ENCODE measurements at regions of chr12 and their contacts with region 1.

Region 1: GRCh38 chr12:6752921-6753771 is at the start of gene MLF2:
- DNase-seq: peak; percentile 99
- CTCF ChIP-seq: peak; percentile 96

Region 2: DNA sequence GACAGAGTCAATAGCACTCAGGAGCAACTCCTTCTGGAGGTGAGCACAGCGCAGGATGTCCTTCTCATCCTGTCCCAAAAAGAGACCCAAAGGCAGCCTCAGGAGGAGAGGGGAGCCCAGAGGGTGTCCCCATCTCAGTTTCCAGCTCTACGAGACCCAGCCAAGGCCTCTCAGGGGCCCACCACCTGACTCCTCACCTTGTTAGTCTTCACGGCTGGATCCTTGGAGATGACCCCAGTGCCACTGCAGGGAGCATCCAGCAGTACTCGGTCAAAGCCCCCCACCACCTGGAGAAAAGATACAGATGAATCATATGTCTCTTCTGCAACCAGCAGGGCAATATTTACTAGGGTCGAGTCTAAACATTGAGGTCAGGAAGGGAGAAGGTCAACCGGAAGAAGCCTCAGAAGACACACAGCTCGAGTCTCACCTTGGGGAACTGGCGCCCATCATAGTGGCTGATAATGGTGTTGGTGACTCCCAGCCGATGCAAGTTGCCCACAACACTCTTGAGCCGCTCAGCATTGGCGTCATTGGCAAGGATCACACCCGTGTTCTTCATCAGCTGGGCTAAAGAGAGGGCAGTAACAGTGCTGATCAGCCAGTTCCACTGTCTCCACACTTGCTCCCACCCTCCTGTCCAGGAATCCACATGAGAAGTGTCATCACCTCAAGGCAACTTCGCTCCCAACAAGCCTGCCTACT is 192.5 kb before region 1 on chr12:
- CTCF ChIA-PET with region 1: no interaction called
- POLR2A ChIA-PET with region 1: no interaction called
- DNase-seq: no peak
- CTCF ChIP-seq: no peak

Region 3: GRCh38 chr12:6613776-6614512 is 139.2 kb before region 1 on chr12:
- CTCF ChIA-PET with region 1: interaction called, 13 read pairs
- POLR2A ChIA-PET with region 1: no interaction called
- DNase-seq: peak; percentile 70
- CTCF ChIP-seq: peak; percentile 19

Region 4: GRCh38 chr12:6735448-6736191 is 17.5 kb before region 1 on chr12:
- CTCF ChIA-PET with region 1: interaction called, 41 read pairs
- POLR2A ChIA-PET with region 1: no interaction called
- DNase-seq: peak; percentile 56
- CTCF ChIP-seq: peak; percentile 81

Region 5: DNA sequence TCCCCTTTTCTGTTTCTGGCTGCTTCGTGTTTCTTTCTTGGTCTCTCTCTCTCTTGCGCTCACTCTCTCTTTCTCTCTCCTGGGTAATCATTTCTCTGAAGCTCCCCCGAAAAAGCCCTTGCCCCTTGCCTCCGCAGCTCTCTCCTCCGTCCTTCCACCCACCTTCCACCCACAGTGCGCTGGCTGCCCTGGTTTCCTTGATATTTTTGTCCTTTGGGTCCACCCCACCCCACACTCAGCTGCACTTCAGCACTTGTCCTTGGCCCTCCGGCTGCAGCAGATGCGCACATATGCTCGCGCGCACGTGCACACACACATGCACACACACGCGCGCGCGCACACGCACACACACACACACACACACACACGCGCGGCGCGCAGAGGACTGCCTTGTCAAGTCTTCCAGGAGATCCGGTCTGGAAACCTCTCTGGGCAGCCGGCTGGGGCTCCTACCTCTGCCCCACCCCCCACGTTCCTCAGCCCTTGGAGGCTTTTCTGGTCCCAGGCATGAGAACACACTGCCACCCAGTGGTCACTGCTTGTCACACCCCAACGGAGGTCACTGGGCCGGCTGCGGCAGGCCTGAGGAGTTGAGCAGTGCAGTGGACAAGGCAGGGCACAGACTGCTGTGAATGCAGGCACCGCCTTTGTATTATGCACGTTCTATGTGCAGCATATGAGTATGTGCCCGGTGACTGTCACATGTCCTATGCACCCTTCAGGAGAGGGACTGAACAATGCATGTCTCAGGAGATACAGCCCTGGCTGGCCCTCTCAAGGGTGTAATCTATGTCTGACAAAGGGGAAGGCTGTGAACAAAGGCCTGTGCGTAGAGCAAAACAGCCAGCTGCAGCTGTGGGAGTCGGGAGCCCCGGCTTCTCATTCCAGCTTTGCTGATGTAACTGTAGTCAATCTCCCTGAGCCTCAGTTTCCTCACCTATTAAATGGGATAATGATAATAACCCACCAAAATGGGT is 25.7 kb after region 1 on chr12:
- CTCF ChIA-PET with region 1: interaction called, 64 read pairs
- POLR2A ChIA-PET with region 1: no interaction called
- DNase-seq: peak; percentile 85
- CTCF ChIP-seq: peak; percentile 99

Region 6: GRCh38 chr12:6807170-6807569 is 54.0 kb after region 1 on chr12:
- CTCF ChIA-PET with region 1: interaction called, 12 read pairs
- POLR2A ChIA-PET with region 1: no interaction called
- DNase-seq: no peak
- CTCF ChIP-seq: no peak

Region 7: DNA sequence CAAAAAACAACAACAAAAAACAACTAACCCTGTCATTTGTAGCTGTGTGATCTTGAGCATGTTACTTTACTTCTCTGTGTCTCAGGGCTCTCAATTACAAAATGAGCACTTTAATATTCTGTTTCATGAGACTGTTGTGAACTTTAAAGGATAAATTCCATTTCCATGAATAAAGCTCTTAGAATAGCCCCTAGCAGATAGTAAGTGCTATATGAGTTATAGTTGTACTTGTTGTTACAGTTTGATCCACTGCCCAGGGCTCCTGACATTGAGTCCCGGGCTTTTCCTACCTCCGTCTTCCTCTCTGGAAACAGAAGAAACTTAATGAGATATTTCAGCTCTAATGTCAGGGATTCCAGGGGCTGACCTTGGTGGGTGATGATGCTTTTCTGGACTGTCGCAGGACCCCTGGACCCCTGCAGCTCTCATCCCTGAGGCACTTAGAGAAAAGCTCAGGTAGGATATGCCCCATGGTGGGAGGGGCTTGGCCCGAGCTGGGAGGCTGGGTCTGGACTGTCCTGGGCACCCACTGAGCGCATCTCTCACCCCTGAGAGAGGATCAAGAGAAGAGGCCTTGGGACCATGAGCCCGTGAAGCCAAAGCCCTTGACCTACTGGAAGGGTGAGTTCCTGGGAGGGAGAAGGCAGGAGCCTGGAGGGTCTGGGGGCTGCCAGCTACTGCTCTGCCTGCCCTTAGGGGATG is 80.2 kb after region 1 on chr12:
- CTCF ChIA-PET with region 1: interaction called, 60 read pairs
- POLR2A ChIA-PET with region 1: no interaction called
- DNase-seq: no peak
- CTCF ChIP-seq: no peak

Region 8: GRCh38 chr12:6851921-6852650 is 98.9 kb after region 1 on chr12 and contains the start of gene USP5:
- CTCF ChIA-PET with region 1: interaction called, 12 read pairs
- POLR2A ChIA-PET with region 1: no interaction called
- DNase-seq: peak; percentile 95
- CTCF ChIP-seq: no peak

Measured in GM10248 (cell line).